Endothelial cell of umbilical vein (primary cell): ENCODE measurements at regions of chr11 and their contacts with region 1.

Region 1: DNA sequence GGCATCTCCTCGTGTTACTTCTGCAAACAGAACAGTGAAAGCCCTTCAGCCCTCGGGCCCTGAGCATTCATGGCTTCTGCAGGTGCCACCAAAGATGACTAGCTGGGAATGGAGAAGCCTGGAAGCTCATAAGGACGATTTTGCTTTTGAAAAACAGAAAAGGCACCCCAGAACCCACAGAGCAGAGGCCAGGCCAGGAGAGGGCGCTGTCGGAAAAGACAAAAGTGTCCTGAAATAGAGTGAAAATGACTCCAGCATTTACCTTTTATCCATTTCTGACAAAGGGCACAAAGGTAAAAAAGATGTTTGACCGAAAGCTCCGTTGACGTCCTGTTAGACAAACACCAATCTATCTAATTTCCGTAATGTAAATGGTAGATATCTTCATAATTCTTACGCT is 37.6 kb downstream of the ZNF195 start:
- DNase-seq: peak; percentile 43
- H3K4me3 ChIP-seq: no peak overlapping the region
- H3K27ac ChIP-seq: no peak overlapping the region
- H3K4me1 ChIP-seq: peaks cover 20% of the 10 kb centered on the region
- H3K27me3 ChIP-seq: no peaks in the 10 kb centered on the region
- CTCF ChIP-seq: peak; percentile 63 to 69
- POLR2A ChIP-seq: no peak

Region 2: GRCh38 chr11:3378426-3379423 is 37.4 kb after region 1 on chr11 and contains the start of gene ZNF195:
- CTCF ChIA-PET with region 1: interaction called, 19 read pairs
- POLR2A ChIA-PET with region 1: interaction called, 5 read pairs
- dilution Hi-C with region 1: no loop called
- intact Hi-C with region 1: no loop called
- DNase-seq: peak; percentile 96
- H3K4me3 ChIP-seq: peak within 1 kb of the TSS; percentile 59 to 94 (median 90)
- H3K27ac ChIP-seq: peak within 1 kb of the TSS; percentile 82
- H3K4me1 ChIP-seq: peaks cover 12% of the 10 kb centered on the region
- H3K27me3 ChIP-seq: no peaks in the 10 kb centered on the region
- CTCF ChIP-seq: no peak
- POLR2A ChIP-seq: peak; percentile 89
- total RNA-seq, gene ZNF195: 32.5 and 41.7 TPM in 2 replicates